Natural killer cell (primary cell): ENCODE measurements at regions of chr9 and their contacts with region 1.

Region 1: DNA sequence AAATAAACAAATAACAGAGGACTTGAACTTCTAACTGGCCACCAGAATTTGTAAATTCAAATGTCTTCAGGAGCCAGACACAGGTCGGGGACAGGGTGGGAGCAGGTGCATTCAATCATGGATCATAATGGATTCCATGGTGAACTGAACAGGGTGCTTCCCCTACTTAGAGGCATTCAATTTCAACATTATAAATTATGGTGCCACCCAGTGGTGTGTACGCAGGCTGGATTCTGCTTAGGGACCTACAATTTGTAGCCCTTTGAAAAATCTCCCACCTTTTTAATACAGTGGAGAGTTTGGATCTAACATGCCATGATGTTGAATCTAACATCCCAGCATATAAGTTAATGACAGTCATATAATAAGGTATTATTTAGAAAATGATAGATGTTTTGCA is 22.3 kb downstream of the KLF9 start:
- DNase-seq: peak in 1 of 2 donors; percentile 40
- ATAC-seq: peak; percentile 61 to 73 (median 67)
- H3K4me3 ChIP-seq: no peak overlapping the region
- H3K4me3 Mint-ChIP-seq: peak overlapping the region; percentile 68
- H3K27ac ChIP-seq: peak overlapping the region; percentile 47
- H3K27ac Mint-ChIP-seq: peak overlapping the region; percentile 84 to 86
- H3K4me1 ChIP-seq: peaks cover 25% of the 10 kb centered on the region
- H3K4me1 Mint-ChIP-seq: peaks cover 77% of the 10 kb centered on the region in 2 donors
- H3K27me3 ChIP-seq: no peaks in the 10 kb centered on the region
- H3K27me3 Mint-ChIP-seq: no peaks in the 10 kb centered on the region
- CTCF ChIP-seq: peak; percentile 19

Region 2: DNA sequence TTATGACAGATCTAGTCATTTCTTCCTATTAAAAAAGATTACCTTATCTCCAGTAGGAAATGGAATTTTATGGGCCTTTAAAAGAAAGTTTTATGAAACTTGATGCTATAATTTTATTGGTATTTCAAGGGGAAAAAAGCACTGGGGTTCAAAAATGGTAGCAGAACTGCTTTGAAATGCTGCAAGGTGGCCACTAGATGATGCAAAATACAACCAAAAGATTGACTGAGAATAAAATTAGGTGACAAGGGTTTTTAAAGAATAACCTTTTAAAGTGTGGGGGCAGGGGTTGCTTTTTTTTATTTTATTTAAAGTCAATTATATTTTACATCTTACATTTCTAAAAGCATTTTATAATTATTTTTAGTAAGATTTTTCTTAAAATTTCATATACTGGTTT is 39.4 kb before region 1 on chr9:
- intact Hi-C with region 1: loop called (anchors 5 kb)
- DNase-seq: peak in 1 of 2 donors; percentile 54
- ATAC-seq: no peak
- H3K4me3 ChIP-seq: no peak overlapping the region
- H3K4me3 Mint-ChIP-seq: no peak overlapping the region
- H3K27ac ChIP-seq: no peak overlapping the region
- H3K27ac Mint-ChIP-seq: no peak overlapping the region
- H3K4me1 ChIP-seq: no peaks in the 10 kb centered on the region
- H3K4me1 Mint-ChIP-seq: peaks cover 5% of the 10 kb centered on the region in 2 donors
- H3K27me3 ChIP-seq: no peaks in the 10 kb centered on the region
- H3K27me3 Mint-ChIP-seq: no peaks in the 10 kb centered on the region
- CTCF ChIP-seq: peak; percentile 58

Region 3: GRCh38 chr9:70494221-70494620 is 102.0 kb after region 1 on chr9:
- intact Hi-C with region 1: no loop called
- DNase-seq: no peak
- ATAC-seq: no peak
- H3K4me3 ChIP-seq: no peak overlapping the region
- H3K4me3 Mint-ChIP-seq: no peak overlapping the region
- H3K27ac ChIP-seq: no peak overlapping the region
- H3K27ac Mint-ChIP-seq: no peak overlapping the region
- H3K4me1 ChIP-seq: peaks cover 14% of the 10 kb centered on the region
- H3K4me1 Mint-ChIP-seq: peaks cover 21 to 29% of the 10 kb centered on the region in 2 donors
- H3K27me3 ChIP-seq: no peaks in the 10 kb centered on the region
- H3K27me3 Mint-ChIP-seq: peaks cover 11 to 19% of the 10 kb centered on the region in 2 donors
- CTCF ChIP-seq: no peak

Region 4: DNA sequence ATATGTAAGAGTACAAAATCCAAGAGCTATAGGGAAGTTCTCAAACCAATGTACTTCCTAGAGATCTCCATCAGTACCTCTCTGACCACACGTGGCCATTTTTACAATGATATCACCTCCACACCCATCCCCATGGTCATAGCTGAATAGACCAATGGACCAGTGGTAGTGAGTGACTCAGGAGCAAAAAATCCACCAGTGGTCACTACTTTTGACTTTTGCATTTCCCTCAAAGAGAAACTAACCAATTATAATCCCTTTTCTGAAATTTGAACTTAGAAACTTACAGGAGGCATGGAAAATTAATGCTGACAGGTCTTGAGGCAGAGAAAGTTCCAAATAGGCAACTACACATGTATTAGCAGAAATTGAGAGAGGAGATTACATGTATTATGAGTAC is 490.9 kb after region 1 on chr9:
- intact Hi-C with region 1: no loop called
- DNase-seq: no peak
- ATAC-seq: no peak
- H3K4me3 ChIP-seq: no peak overlapping the region
- H3K4me3 Mint-ChIP-seq: no peak overlapping the region
- H3K27ac ChIP-seq: no peak overlapping the region
- H3K27ac Mint-ChIP-seq: no peak overlapping the region
- H3K4me1 ChIP-seq: no peaks in the 10 kb centered on the region
- H3K4me1 Mint-ChIP-seq: no peaks in the 10 kb centered on the region
- H3K27me3 ChIP-seq: no peaks in the 10 kb centered on the region
- H3K27me3 Mint-ChIP-seq: no peaks in the 10 kb centered on the region
- CTCF ChIP-seq: no peak

Region 5: DNA sequence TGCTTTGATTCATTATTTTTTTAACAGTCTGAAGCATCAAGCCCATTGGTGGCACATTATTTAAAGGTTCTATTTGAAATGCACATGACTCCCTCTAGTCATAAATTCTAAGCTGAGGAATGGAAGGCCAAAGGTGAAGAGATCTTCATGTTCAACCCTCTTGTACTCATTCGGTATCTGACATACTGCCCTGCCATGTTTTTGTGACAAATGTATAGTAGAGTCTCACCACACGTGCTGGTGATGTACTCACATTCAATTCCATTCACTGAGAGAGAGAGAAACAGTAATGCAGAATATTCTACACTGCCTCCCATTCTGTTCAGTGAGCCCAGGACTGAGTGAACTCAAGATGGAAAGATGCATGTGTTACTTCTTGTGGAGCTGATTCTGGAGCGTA is 1855.4 kb after region 1 on chr9:
- intact Hi-C with region 1: loop called (anchors 5 kb)
- DNase-seq: no peak
- ATAC-seq: no peak
- H3K4me3 ChIP-seq: no peak overlapping the region
- H3K4me3 Mint-ChIP-seq: no peak overlapping the region
- H3K27ac ChIP-seq: no peak overlapping the region
- H3K27ac Mint-ChIP-seq: no peak overlapping the region
- H3K4me1 ChIP-seq: no peaks in the 10 kb centered on the region
- H3K4me1 Mint-ChIP-seq: no peaks in the 10 kb centered on the region
- H3K27me3 ChIP-seq: peaks cover 3% of the 10 kb centered on the region
- H3K27me3 Mint-ChIP-seq: peaks cover 2 to 35% of the 10 kb centered on the region in 2 donors
- CTCF ChIP-seq: no peak